Heart left ventricle (tissue), 16 donors: ENCODE measurements at regions of chr15 and their contacts with region 1.

Region 1: DNA sequence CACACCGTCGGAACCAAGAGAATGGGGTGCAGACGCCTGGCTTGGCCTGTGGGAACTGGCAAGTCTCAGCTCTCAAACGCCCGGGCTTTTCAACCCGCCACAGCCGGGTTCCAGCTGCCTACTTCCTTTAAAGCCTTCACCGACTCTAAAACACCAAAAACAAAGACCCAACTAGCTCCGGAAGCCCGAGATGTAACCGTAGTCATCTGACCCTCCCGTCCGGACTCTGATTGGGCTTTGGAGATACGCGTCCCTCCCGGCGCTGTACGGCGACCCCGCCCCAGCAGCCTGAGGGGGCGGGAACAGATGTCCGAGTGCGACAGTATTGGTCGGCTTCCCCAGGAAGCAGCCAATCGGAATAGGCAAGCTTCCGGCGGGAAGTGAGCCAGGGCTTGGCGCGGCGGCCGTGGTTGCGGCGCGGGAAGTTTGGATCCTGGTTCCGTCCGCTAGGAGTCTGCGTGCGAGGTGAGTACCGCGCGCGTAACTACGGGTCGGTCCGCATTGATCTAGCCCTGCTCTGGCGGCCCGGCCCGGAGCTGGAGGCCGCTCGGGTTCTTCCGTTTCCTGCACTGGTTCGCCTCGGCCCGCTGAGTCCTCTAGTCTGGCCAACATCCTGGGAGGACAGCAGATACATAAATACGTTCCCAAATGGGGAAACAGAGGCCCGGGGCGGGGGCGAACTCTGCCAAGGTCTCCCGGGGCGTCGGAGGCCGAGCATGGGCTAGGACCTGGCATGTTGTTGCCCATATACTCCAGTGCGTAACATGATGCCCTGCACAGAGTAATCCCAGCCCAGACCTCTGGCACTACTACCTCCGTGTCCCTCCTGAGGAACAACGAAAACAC is at the start of gene BLM:
- DNase-seq: peak; percentile 95 to 98 (median 96)
- ATAC-seq: peak; percentile 100
- H3K4me3 ChIP-seq: peak within 1 kb of the TSS; percentile 9 to 83 (median 66)
- H3K27ac ChIP-seq: peak within 1 kb of the TSS; percentile 68 to 97 (median 88)
- H3K4me1 ChIP-seq: peaks cover 0 to 25% (median 10%) of the 10 kb centered on the region in 12 donors
- H3K27me3 ChIP-seq: no peaks in the 10 kb centered on the region
- CTCF ChIP-seq: peak in 11 of 12 donors; percentile 18 to 54 (median 39)
- POLR2A ChIP-seq: peak in 1 of 2 donors; percentile 78
- total RNA-seq, gene BLM: 4.3 to 39.6 (median 12.2) TPM

Region 2: GRCh38 chr15:90762109-90762508 is 44.9 kb after region 1 on chr15:
- intact Hi-C with region 1: loop called in 1 of 10 experiments (anchors 5 kb)
- DNase-seq: peak; percentile 33 to 93 (median 77)
- ATAC-seq: peak; percentile 96 to 99 (median 98)
- H3K4me3 ChIP-seq: peak overlapping the region in 5 of 12 donors; percentile 1 to 21 (median 14)
- H3K27ac ChIP-seq: peak overlapping the region; percentile 51 to 92 (median 76)
- H3K4me1 ChIP-seq: peaks cover 0 to 39% (median 10%) of the 10 kb centered on the region in 12 donors
- H3K27me3 ChIP-seq: no peaks in the 10 kb centered on the region
- CTCF ChIP-seq: no peak
- POLR2A ChIP-seq: peak in 1 of 2 donors; percentile 25